Stomach (tissue), 19 donors: ENCODE measurements at regions of chr1 and their contacts with region 1.

Region 1: DNA sequence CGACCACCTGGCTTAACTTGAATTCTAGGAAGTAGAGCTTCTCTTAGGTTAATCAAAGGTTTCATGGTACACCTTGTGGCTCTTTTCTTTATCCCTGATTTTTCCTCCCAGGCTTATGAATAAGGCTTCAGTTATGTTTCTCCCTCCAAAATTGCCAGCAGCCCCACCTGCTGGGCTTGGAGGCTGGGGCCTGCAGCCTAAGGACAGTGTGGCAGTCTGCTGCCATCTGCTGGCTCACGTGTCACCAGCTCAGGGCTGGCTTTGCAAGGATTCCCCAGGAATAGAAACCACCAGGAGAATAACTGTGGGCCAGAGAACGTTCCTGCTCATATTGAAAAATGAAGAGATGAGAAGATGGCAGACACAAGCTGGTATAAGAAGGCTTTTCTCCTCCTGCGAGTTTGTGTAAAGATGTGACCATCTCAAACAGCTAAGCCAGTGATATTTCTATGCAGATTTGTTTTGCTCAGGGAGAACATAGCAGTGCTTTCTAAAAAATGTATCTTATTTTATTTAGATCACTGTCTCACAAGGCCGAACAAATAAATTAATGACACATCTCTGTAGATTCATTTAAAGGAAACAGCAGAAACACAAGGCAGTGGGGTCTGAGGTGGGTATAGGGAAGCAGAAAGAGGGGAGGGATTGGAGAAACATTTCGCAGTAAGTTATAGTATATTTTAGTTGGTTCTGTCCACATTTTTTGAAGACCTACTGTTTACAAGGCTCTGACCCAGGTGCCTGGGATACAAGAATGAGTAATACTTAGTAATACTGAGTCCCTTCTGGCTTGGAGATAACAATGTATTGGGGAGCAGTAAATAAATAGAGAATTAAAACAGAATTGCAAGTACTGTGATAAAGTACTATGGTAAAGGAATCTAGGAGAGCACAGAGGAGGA is 291.1 kb upstream of the SGIP1 start:
- DNase-seq: peak; percentile 91 to 96
- H3K4me3 ChIP-seq: no peak overlapping the region
- H3K27ac ChIP-seq: no peak overlapping the region
- H3K4me1 ChIP-seq: peaks cover 0 to 30% (median 12%) of the 10 kb centered on the region in 4 donors
- H3K27me3 ChIP-seq: no peaks in the 10 kb centered on the region
- CTCF ChIP-seq: peak in 5 of 7 experiments; percentile 93 to 99 (median 97)
- EP300 ChIP-seq: no peak
- POLR2A ChIP-seq: no peak

Region 2: DNA sequence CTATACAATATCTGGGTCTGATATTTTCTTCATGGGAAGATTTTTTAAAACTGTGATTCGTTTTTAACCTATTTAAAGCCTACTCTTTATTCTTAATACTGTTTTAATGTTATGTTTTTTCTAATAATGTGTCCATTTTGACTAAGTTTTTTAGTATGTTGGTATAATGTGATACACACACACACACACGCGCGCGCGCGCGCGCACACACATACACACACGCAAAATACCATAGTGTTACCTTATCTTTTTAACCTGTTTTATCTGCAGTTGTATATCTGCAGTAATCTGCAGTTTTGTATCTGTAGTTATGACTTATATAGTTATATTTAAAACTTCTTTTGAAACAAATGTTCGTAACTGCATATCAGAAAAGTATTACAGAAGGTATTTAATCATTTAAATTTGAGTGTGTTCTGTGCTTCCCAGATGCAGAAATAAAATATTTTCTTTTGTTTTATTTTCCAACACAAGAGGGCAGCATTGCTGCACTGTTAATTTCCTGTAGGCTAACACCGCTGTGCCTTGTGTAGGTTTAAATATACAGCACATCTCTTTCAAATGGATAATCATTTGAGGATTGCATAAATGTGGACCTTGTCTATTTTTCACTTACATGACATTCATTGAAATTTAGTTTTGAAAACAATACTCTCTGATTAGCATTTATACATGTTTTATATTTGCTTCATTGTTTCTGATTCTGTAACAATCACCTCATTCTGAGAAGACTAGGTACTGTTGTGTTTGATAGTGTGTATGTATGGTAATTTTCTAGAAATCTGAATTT is 284.1 kb before region 1 on chr1:
- intact Hi-C with region 1: loop called (anchors 5 kb)
- DNase-seq: peak in 1 of 2 donors; percentile 79
- H3K4me3 ChIP-seq: no peak overlapping the region
- H3K27ac ChIP-seq: no peak overlapping the region
- H3K4me1 ChIP-seq: peaks cover 0 to 10% (median 4%) of the 10 kb centered on the region in 4 donors
- H3K27me3 ChIP-seq: no peaks in the 10 kb centered on the region
- CTCF ChIP-seq: peak in 5 of 7 experiments; percentile 10 to 75 (median 53)
- EP300 ChIP-seq: no peak
- POLR2A ChIP-seq: no peak

Region 3: DNA sequence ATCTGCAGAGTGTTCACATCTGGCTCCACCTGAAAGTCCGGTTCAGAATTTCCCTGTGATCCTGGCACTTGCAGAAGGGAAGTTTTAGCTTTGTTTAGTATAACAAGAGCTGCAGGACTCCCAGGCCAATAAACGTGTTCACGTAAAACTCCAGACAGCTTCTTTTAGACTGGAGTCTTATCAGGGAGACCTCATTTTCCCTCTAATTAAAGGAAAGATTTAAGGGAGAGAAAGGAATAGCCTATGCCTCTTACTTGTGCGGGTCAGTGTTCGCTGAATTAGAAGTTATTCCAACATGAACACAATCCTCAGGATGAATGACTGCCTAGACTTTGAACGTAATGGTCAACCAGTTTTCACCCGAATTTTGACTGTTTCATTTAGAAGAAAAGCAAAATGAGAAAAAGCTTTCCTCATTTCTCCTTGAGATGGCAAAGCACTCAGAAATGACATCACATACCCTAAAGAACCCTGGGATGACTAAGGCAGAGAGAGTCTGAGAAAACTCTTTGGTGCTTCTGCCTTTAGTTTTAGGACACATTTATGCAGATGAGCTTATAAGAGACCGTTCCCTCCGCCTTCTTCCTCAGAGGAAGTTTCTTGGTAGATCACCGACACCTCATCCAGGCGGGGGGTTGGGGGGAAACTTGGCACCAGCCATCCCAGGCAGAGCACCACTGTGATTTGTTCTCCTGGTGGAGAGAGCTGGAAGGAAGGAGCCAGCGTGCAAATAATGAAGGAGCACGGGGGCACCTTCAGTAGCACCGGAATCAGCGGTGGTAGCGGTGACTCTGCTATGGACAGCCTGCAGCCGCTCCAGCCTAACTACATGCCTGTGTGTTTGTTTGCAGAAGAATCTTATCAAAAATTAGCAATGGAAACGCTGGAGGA is 89.0 kb after region 1 on chr1:
- intact Hi-C with region 1: no loop called
- DNase-seq: peak; percentile 60 to 83
- H3K4me3 ChIP-seq: peak overlapping the region; percentile 32 to 53 (median 49)
- H3K27ac ChIP-seq: peak overlapping the region; percentile 53 to 91 (median 82)
- H3K4me1 ChIP-seq: peaks cover 10 to 52% (median 29%) of the 10 kb centered on the region in 4 donors
- H3K27me3 ChIP-seq: no peaks in the 10 kb centered on the region
- CTCF ChIP-seq: peak in 4 of 7 experiments; percentile 22 to 25 (median 24)
- EP300 ChIP-seq: no peak
- POLR2A ChIP-seq: no peak

Region 4: GRCh38 chr1:66464802-66465201 is 221.9 kb after region 1 on chr1:
- intact Hi-C with region 1: no loop called
- DNase-seq: no peak
- H3K4me3 ChIP-seq: no peak overlapping the region
- H3K27ac ChIP-seq: no peak overlapping the region
- H3K4me1 ChIP-seq: no peaks in the 10 kb centered on the region
- H3K27me3 ChIP-seq: no peaks in the 10 kb centered on the region
- CTCF ChIP-seq: no peak
- EP300 ChIP-seq: no peak
- POLR2A ChIP-seq: no peak